Endothelial cell of umbilical vein (primary cell): ENCODE measurements at regions of chr3 and their contacts with region 1.

Region 1: DNA sequence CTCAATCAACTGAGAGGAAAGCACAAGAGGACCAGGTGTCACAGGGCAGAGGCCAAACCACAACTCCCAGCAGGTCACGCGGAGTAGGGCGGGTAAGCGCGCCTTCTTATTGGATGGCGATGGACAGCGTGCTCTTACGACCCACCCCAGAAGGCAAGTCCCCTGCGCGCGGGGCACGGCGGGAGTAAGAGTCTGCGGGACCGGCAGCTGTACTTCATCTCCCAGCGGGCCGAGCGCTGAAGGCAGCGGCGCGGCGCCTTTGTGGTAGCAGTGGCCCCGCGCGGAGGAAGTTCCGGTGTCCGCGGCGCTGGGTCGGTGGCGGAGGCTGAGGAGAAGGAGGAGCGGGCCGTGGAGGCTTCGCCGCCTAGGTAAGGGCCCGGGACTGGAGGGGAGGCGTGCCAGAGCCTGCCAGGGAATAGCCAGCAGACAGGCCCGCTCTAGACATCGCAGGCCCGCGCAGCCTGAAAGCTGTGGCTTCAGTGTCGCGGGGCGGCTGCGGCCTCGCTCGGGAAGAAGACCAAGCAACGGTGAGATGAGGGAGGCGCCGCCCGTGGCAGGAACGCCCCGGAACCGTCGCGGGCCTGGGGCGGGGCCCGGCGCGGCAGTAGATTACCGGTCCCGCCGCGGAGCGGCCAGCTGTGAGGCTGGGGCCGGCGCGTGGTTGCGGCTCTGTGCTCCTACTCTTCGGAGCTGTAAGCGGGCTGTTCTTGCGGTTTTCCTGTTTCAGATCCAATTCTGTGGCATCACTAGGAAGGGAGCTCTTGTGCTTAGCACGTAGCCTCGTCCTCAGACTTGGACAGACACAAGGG is at the start of gene RBM6:
- DNase-seq: peak; percentile 97
- H3K4me3 ChIP-seq: peak within 1 kb of the TSS; percentile 44 to 85 (median 84)
- H3K27ac ChIP-seq: peak within 1 kb of the TSS; percentile 64
- H3K4me1 ChIP-seq: peaks cover 5% of the 10 kb centered on the region
- H3K27me3 ChIP-seq: no peaks in the 10 kb centered on the region
- CTCF ChIP-seq: no peak
- POLR2A ChIP-seq: peak; percentile 98
- total RNA-seq, gene RBM6: 94.5 and 96.0 TPM in 2 replicates

Region 2: DNA sequence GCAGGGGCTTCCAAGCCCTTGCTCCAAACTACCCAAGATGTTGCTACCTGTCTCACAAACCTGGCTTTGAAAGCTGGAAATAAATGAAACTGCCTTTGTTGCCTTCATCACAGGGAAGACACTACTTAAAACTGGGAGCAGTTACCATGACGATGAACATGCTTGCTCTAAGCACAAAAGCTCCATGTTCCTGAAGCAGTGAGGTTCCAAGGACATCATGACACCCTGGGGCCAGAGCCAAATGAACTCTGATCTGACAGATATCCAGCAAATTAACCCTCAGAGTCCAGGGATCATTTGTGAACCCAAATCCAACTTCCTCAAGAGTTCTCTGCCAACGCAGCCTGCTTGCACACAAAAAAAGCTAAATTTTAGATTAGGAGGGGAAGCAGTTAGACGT is 94.4 kb before region 1 on chr3:
- CTCF ChIA-PET with region 1: no interaction called
- POLR2A ChIA-PET with region 1: no interaction called
- dilution Hi-C with region 1: no loop called
- intact Hi-C with region 1: no loop called
- DNase-seq: no peak
- H3K4me3 ChIP-seq: no peak overlapping the region
- H3K27ac ChIP-seq: no peak overlapping the region
- H3K4me1 ChIP-seq: peaks cover 10% of the 10 kb centered on the region
- H3K27me3 ChIP-seq: no peaks in the 10 kb centered on the region
- CTCF ChIP-seq: no peak
- POLR2A ChIP-seq: no peak

Region 3: GRCh38 chr3:49929331-49930240 is 10.5 kb before region 1 on chr3 and contains the start of gene MON1A:
- CTCF ChIA-PET with region 1: interaction called, 16 read pairs
- POLR2A ChIA-PET with region 1: interaction called, 19 read pairs
- dilution Hi-C with region 1: no loop called
- intact Hi-C with region 1: loop called (anchors 1 kb)
- DNase-seq: peak; percentile 93
- H3K4me3 ChIP-seq: peak within 1 kb of the TSS; percentile 65 to 75 (median 68)
- H3K27ac ChIP-seq: peak within 1 kb of the TSS; percentile 51
- H3K4me1 ChIP-seq: peaks cover 5% of the 10 kb centered on the region
- H3K27me3 ChIP-seq: no peaks in the 10 kb centered on the region
- CTCF ChIP-seq: peak in 1 of 2 donors; percentile 30
- POLR2A ChIP-seq: peak; percentile 80
- total RNA-seq, gene MON1A: 17.0 and 17.5 TPM in 2 replicates

Region 4: GRCh38 chr3:50088725-50089608 is 148.9 kb after region 1 on chr3 and contains the start of gene RBM5:
- CTCF ChIA-PET with region 1: no interaction called
- POLR2A ChIA-PET with region 1: interaction called, 6 read pairs
- dilution Hi-C with region 1: no loop called
- intact Hi-C with region 1: loop called (anchors 10 kb)
- DNase-seq: peak; percentile 92
- H3K4me3 ChIP-seq: peak within 1 kb of the TSS; percentile 62 to 82 (median 82)
- H3K27ac ChIP-seq: peak within 1 kb of the TSS; percentile 90
- H3K4me1 ChIP-seq: peaks cover 14% of the 10 kb centered on the region
- H3K27me3 ChIP-seq: no peaks in the 10 kb centered on the region
- CTCF ChIP-seq: no peak
- POLR2A ChIP-seq: peak; percentile 89
- total RNA-seq, gene RBM5: 188 and 190 TPM in 2 replicates